ENCODE measurements at regions of chr7 and their contacts with region 1.

Region 1: GRCh38 chr7:38796626-38797501 is 112.1 kb downstream of the VPS41 start:
- DNase-seq: peak in 7 of 9 donors; percentile 7 to 49 (median 34)
- ATAC-seq: peak; percentile 50
- H3K4me3 ChIP-seq: no peak overlapping the region
- H3K4me3 Mint-ChIP-seq: no peak overlapping the region
- H3K27ac ChIP-seq: no peak overlapping the region
- H3K27ac Mint-ChIP-seq: no peak overlapping the region
- H3K4me1 ChIP-seq: no peaks in the 10 kb centered on the region
- H3K4me1 Mint-ChIP-seq: peaks cover 0 to 7% (median 0%) of the 10 kb centered on the region in 7 donors
- H3K27me3 ChIP-seq: no peaks in the 10 kb centered on the region
- H3K27me3 Mint-ChIP-seq: no peaks in the 10 kb centered on the region

Region 2: GRCh38 chr7:38781991-38782390 is 14.9 kb before region 1 on chr7:
- CTCF ChIA-PET with region 1: no interaction called
- POLR2A ChIA-PET with region 1: no interaction called
- intact Hi-C with region 1: no loop called
- DNase-seq: no peak
- ATAC-seq: no peak
- H3K4me3 ChIP-seq: no peak overlapping the region
- H3K4me3 Mint-ChIP-seq: no peak overlapping the region
- H3K27ac ChIP-seq: no peak overlapping the region
- H3K27ac Mint-ChIP-seq: peak overlapping the region in 2 of 9 donors; percentile 32 to 78
- H3K4me1 ChIP-seq: no peaks in the 10 kb centered on the region
- H3K4me1 Mint-ChIP-seq: peaks cover 0 to under 1% (median 0%) of the 10 kb centered on the region in 7 donors
- H3K27me3 ChIP-seq: no peaks in the 10 kb centered on the region
- H3K27me3 Mint-ChIP-seq: no peaks in the 10 kb centered on the region

Region 3: DNA sequence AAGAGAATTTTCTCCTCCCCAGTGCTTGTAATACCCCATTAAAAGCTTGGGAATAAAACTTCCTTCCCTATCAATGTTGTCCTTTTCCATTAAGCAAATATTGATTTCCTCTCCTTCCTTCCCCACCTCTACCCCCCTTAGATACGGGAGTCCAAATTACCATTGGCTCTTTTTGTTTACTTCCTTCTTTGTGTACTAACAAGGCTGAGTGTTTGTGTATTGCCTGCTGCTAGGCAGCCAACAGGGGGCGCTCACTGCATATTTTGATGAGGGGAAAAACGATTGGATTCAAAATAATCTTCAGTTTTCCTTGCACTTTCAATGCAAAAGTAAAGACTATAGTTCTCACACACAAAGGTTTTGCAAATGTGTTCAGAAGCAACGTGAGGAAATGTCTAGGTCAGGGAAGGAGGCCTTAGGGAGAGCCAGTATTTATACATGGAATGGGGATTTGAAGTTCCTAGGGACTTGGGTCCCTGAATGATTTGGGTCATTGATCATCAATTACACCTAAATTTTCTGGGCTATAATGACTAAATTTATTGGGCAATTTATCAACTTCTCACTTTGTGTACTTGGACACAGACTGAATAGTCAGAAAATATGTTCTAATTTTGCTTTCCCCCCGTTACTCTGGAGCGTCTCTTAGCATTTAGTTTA is 135.8 kb after region 1 on chr7:
- CTCF ChIA-PET with region 1: no interaction called
- POLR2A ChIA-PET with region 1: no interaction called
- intact Hi-C with region 1: loop called in 1 of 2 experiments (anchors 1 kb)
- DNase-seq: peak in 3 of 9 donors; percentile 9 to 38 (median 19)
- ATAC-seq: peak; percentile 41
- H3K4me3 ChIP-seq: no peak overlapping the region
- H3K4me3 Mint-ChIP-seq: no peak overlapping the region
- H3K27ac ChIP-seq: no peak overlapping the region
- H3K27ac Mint-ChIP-seq: no peak overlapping the region
- H3K4me1 ChIP-seq: no peaks in the 10 kb centered on the region
- H3K4me1 Mint-ChIP-seq: peaks cover 0 to 8% (median 0%) of the 10 kb centered on the region in 7 donors
- H3K27me3 ChIP-seq: no peaks in the 10 kb centered on the region
- H3K27me3 Mint-ChIP-seq: peaks cover 7 to 20% (median 16%) of the 10 kb centered on the region in 5 donors

Region 4: GRCh38 chr7:39453743-39454355 is 657.0 kb after region 1 on chr7:
- CTCF ChIA-PET with region 1: interaction called, 3 read pairs
- POLR2A ChIA-PET with region 1: no interaction called
- intact Hi-C with region 1: loop called in 1 of 2 experiments (anchors 2 kb)
- DNase-seq: peak in 7 of 9 donors; percentile 27 to 53 (median 46)
- ATAC-seq: peak; percentile 74
- H3K4me3 ChIP-seq: no peak overlapping the region
- H3K4me3 Mint-ChIP-seq: no peak overlapping the region
- H3K27ac ChIP-seq: no peak overlapping the region
- H3K27ac Mint-ChIP-seq: no peak overlapping the region
- H3K4me1 ChIP-seq: no peaks in the 10 kb centered on the region
- H3K4me1 Mint-ChIP-seq: no peaks in the 10 kb centered on the region
- H3K27me3 ChIP-seq: no peaks in the 10 kb centered on the region
- H3K27me3 Mint-ChIP-seq: peaks cover 4 to 15% (median 12%) of the 10 kb centered on the region in 5 donors

Region 5: DNA sequence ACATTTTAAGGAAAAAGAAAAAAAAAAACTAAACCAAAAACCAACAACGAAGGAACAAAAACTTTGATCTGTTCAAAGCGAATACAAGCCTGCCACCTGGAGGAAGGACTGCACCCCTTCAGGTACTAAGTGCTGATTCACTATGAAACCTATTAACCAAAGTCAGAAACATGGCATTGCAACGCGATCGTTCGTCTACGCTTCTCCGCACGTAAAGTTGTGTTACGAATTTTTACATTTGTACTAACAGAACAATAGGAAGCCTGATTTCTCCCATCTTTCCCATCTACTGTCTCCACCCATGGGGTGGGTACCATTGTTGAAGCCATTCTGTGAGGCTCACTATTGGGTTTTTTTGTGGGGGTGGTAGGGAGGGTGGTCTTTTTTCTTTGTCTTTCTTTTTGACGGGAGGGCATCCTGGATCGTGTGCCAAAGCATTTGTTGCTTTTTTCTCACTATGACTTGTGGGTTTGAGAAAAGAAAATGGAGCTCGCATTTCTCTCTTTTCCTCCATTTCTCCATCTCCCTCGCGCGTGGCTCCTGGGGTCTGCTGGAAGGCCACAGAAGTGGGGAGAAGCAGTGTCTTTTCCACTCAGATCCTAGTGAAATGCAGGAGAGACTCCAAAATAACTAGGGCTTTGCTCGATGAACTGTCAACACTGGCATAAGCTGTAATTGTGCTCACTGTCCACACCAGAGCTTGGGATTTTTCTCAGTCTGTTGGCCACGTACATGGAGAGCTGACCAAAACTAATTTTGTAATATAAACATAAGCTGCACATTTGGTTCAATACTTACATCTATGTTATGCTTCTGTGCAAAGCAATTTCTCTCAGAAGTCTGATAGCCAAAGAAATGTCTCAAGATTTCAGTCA is 668.4 kb after region 1 on chr7:
- CTCF ChIA-PET with region 1: no interaction called
- POLR2A ChIA-PET with region 1: no interaction called
- intact Hi-C with region 1: loop called (anchors 1 kb)
- DNase-seq: peak in 7 of 9 donors; percentile 7 to 36 (median 27)
- ATAC-seq: peak; percentile 57
- H3K4me3 ChIP-seq: no peak overlapping the region
- H3K4me3 Mint-ChIP-seq: peak overlapping the region in 1 of 10 donors; percentile 26
- H3K27ac ChIP-seq: no peak overlapping the region
- H3K27ac Mint-ChIP-seq: no peak overlapping the region
- H3K4me1 ChIP-seq: no peaks in the 10 kb centered on the region
- H3K4me1 Mint-ChIP-seq: peaks cover 0 to 6% (median 5%) of the 10 kb centered on the region in 7 donors
- H3K27me3 ChIP-seq: no peaks in the 10 kb centered on the region
- H3K27me3 Mint-ChIP-seq: peaks cover 7 to 48% (median 21%) of the 10 kb centered on the region in 5 donors

Region 6: GRCh38 chr7:39517240-39517639 is 720.4 kb after region 1 on chr7:
- CTCF ChIA-PET with region 1: no interaction called
- POLR2A ChIA-PET with region 1: no interaction called
- intact Hi-C with region 1: loop called (anchors 1 kb)
- DNase-seq: no peak
- ATAC-seq: no peak
- H3K4me3 ChIP-seq: no peak overlapping the region
- H3K4me3 Mint-ChIP-seq: no peak overlapping the region
- H3K27ac ChIP-seq: no peak overlapping the region
- H3K27ac Mint-ChIP-seq: no peak overlapping the region
- H3K4me1 ChIP-seq: no peaks in the 10 kb centered on the region
- H3K4me1 Mint-ChIP-seq: peaks cover 0 to 3% (median 0%) of the 10 kb centered on the region in 7 donors
- H3K27me3 ChIP-seq: no peaks in the 10 kb centered on the region
- H3K27me3 Mint-ChIP-seq: peaks cover 2 to 11% (median 5%) of the 10 kb centered on the region in 5 donors

Measured in naive thymus-derived CD4-positive, alpha-beta T cell (primary cell).